ENCODE measurements at regions of chr1 and their contacts with region 1.

Region 1: DNA sequence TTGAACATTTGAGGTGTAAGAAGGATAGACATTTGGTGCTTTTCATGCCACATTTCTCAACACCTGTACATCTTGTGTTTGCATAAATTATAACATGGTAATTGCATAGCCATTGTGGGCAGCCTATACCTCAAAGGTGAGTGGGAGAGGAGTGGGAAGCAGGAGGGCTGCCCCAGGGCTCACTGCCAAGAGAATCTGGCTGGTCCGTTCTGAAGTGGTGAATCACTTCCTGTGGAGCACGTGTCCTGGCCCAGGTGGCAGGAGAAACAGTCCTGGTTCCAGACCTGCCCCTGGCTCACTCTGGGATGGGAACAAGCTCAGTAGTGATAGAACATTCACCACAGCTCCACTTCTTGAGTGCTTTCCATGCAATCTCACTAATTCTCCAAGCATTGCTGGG is 11.6 kb upstream of the OLFML2B start:
- DNase-seq: no peak
- ATAC-seq: no peak
- H3K4me3 ChIP-seq: no peak overlapping the region
- H3K27ac ChIP-seq: no peak overlapping the region
- H3K4me1 ChIP-seq: peaks cover 0 to 12% (median 0%) of the 10 kb centered on the region in 9 donors
- H3K27me3 ChIP-seq: peaks cover 0 to 9% (median 0%) of the 10 kb centered on the region in 7 donors
- CTCF ChIP-seq: no peak

Region 2: DNA sequence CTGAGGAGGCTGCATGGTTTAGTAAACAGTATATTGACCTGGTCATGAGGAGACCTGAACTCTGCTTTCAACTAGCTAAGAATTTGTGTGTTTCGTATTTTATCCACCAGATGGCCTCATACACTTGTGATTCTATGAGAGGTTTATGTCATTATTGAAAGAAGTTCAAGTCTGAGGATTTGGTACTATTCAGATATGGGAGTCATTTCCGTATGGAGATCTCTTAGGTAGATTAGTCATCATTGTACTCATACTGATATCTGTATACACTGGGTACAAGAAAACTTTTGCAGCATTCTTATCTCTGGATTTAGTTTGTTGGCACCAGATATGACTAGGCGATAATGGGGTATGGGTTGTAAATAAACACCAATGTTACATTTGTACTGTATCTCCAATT is 242.5 kb before region 1 on chr1:
- intact Hi-C with region 1: loop called (anchors 1 to 5 kb)
- DNase-seq: peak in 1 of 2 donors; percentile 11
- ATAC-seq: peak in 7 of 8 donors; percentile 21 to 66 (median 45)
- H3K4me3 ChIP-seq: no peak overlapping the region
- H3K27ac ChIP-seq: no peak overlapping the region
- H3K4me1 ChIP-seq: no peaks in the 10 kb centered on the region
- H3K27me3 ChIP-seq: no peaks in the 10 kb centered on the region
- CTCF ChIP-seq: peak; percentile 16 to 75 (median 62)

Region 3: GRCh38 chr1:161855260-161855659 is 180.0 kb before region 1 on chr1:
- intact Hi-C with region 1: loop called in 6 of 10 experiments (anchors 5 to 10 kb)
- DNase-seq: no peak
- ATAC-seq: no peak
- H3K4me3 ChIP-seq: no peak overlapping the region
- H3K27ac ChIP-seq: no peak overlapping the region
- H3K4me1 ChIP-seq: no peaks in the 10 kb centered on the region
- H3K27me3 ChIP-seq: no peaks in the 10 kb centered on the region
- CTCF ChIP-seq: no peak

Region 4: DNA sequence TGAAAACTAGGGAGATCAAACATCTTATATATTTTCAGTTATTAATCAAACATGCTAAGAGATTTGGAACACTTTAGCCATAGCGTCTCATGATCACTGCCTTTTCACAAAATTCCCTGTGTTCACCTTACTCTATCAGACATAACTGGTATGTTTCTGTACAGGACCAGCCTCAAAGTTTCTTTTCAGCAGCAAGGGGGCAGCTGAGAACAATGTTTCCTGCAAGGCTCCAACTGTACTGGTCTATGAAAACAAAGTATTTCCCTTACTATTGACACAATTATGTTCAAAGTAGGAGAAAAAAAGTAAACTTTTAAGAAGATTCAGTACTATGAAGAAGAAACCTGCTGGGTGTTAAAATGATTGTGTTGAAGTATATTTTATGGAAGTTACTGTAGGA is 170.7 kb before region 1 on chr1:
- intact Hi-C with region 1: loop called in 7 of 10 experiments (anchors 2 to 10 kb)
- DNase-seq: peak in 1 of 2 donors; percentile 11
- ATAC-seq: peak in 3 of 8 donors; percentile 57 to 65 (median 62)
- H3K4me3 ChIP-seq: no peak overlapping the region
- H3K27ac ChIP-seq: no peak overlapping the region
- H3K4me1 ChIP-seq: peaks cover 0 to 9% (median 0%) of the 10 kb centered on the region in 9 donors
- H3K27me3 ChIP-seq: no peaks in the 10 kb centered on the region
- CTCF ChIP-seq: peak in 7 of 9 donors; percentile 23 to 60 (median 43)

Region 5: GRCh38 chr1:161973924-161974845 is 61.1 kb before region 1 on chr1:
- intact Hi-C with region 1: no loop called
- DNase-seq: peak; percentile 35 to 59
- ATAC-seq: peak; percentile 68 to 90 (median 82)
- H3K4me3 ChIP-seq: no peak overlapping the region
- H3K27ac ChIP-seq: peak overlapping the region in 9 of 10 donors; percentile 0 to 57 (median 40)
- H3K4me1 ChIP-seq: peaks cover 0 to 19% (median 13%) of the 10 kb centered on the region in 9 donors
- H3K27me3 ChIP-seq: no peaks in the 10 kb centered on the region
- CTCF ChIP-seq: no peak

Region 6: DNA sequence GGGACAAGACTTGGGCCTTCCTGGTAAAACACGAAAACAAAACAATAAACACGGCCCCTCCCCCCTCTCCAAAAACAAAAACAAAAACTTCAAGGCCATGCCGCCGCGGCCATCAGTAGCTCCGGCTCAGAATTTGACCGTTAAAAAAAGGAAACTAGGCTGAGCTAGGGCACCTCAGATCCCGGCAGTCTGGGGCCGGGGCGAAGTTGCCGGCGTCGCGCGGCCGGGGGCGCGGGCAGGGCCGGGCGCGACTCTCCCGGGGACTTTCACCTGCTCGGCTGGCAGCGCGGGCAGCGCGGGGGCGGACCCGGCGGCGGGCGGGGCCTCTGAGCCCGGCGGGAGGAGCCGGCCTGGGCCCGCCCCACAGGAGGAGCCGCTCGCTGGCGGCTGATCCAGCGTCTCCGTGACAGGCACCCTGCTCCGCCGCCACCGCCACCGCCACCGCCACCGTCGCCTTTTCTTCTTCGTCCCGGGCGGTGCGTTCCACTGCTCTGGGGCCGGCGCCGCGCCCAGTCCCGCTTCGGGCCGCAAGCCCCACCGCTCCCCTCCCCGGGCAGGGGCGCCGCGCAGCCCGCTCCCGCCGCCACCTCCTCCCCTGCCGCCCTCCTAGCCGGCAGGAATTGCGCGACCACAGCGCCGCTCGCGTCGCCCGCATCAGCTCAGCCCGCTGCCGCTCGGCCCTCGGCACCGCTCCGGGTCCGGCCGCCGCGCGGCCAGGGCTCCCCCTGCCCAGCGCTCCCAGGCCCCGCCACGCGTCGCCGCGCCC is 34.3 kb after region 1 on chr1 and contains the start of gene NOS1AP:
- intact Hi-C with region 1: no loop called
- DNase-seq: peak; percentile 69 to 84
- ATAC-seq: peak; percentile 95 to 99 (median 96)
- H3K4me3 ChIP-seq: peak within 1 kb of the TSS; percentile 44 to 73 (median 66)
- H3K27ac ChIP-seq: peak within 1 kb of the TSS in 8 of 10 donors; percentile 57 to 85 (median 66)
- H3K4me1 ChIP-seq: peaks cover 0 to 38% (median 15%) of the 10 kb centered on the region in 9 donors
- H3K27me3 ChIP-seq: peaks cover 0 to 76% (median 5%) of the 10 kb centered on the region in 7 donors
- CTCF ChIP-seq: peak in 1 of 9 donors; percentile 12
- total RNA-seq, gene NOS1AP: 1.7 to 7.1 (median 4.7) TPM

Measured in heart right ventricle (tissue), 16 donors.